ENCODE measurements at regions of chr2 and their contacts with region 1.

Region 1: GRCh38 chr2:131064589-131065512 is 28.4 kb downstream of the FAM168B start:
- DNase-seq: no peak

Region 2: GRCh38 chr2:129764376-129765325 is 1300.2 kb before region 1 on chr2:
- intact Hi-C with region 1: no loop called
- DNase-seq: no peak

Region 3: DNA sequence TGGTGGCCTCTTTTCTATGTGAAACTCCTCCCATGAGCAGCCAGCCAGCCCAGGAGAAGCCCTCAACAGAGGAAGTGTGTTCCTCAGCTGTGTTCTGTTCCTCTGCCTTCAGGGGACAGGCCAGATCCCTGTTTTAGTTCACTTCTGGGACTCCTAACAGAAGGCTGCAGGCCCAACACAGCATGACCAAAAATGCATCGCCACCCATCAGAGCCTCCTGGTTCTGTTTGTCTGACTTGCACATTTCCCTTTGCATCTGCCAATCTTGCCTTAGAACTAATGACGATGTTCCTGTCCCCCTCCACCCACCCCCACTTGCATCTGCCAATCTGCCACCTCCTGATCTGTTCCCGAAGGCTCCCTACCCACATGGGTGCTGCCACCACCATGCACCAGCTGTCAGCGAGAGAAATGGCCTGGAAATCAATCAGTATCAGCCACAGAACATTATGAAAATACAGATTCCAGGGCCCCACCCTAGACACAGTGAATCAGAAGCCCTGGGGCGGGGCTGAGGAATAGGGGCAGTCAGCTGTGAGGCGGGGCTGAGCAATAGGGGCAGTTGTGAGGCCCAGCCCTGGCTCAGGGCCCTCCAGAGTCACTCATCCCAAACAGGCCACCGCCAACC is 22.6 kb before region 1 on chr2:
- intact Hi-C with region 1: loop called in 1 of 2 experiments (anchors 1 kb)
- DNase-seq: no peak